Gastrocnemius medialis (tissue), 4 donors: ENCODE measurements at regions of chrX and their contacts with region 1.

Region 1: DNA sequence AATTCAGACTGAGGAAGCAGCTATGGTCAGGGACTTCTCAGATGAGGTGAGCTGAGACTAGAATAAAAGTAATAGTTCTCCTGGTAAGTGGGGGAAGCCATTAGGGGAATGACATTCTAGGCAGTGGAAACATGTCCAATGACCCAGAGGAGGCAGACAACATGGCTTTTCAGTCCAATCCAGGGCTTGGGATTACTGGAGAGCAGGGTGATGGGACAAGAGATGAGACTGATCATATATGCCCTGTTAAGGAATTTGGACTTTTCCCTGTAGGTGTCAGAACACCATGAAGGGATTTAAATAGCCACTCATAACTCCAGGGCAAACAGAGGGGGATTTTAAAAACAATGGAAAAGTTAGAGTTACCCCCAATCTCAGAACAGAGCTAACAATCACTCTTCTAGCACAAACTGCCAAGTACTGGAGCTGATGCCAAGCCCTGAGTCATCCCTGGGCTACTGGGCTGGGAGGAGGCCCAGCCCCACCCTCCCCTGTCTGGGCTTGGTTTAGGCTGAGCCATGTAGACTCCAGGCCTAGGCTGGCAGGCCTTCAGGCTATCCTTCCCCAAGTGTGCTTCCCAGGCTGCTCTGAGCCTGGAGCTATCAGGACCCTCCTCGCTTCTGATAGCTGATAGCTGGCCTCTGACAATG is 22.7 kb upstream of the MSN start:
- DNase-seq: peak; percentile 66 to 84
- ATAC-seq: peak; percentile 94 to 99
- H3K4me3 ChIP-seq: no peak overlapping the region
- H3K27ac ChIP-seq: peak overlapping the region; percentile 58 to 75 (median 66)
- H3K4me1 ChIP-seq: peaks cover 4 to 13% of the 10 kb centered on the region in 2 donors
- H3K27me3 ChIP-seq: no peaks in the 10 kb centered on the region
- CTCF ChIP-seq: no peak
- POLR2A ChIP-seq: no peak

Region 2: DNA sequence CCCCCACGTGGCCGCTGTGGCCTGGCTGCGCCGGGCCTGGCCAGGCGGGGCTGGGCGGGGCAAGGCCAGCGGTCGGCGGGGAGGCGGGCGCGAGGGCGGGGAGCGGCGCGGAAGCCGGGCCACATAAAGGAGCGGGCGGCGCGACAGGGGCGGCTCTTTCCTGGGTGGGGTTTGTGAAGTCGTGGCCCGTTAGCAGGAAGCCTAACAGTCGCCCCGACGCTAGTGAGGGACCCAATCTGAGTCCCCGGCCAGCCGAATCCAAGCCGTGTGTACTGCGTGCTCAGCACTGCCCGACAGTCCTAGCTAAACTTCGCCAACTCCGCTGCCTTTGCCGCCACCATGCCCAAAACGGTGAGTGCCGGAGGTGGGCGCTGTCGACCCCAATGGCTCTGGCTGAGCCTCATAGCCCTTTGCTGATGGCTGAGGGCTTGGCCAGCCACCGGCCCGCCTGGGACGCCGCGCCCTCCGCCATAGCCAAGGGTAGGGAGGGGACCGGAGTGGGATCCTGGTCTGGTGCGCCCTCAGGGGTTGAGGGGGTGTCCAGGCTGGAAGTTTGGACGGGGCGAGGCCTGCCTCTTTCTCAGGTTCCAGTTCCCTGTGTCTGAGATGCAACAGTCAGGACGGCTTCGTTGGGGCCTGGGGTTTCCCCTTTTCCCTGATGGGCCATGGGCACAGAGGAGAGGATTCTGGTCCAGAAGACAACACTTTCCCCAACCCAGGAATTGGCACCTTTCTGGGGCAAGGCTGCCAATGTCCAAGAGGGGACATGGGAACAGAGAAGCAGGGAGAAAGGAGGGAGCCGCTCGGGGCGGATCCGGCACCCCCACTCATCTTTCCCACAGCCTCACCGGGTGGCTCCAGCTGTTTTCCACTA is 23.0 kb after region 1 on chrX and contains the start of gene MSN:
- in situ Hi-C with region 1: no loop called
- intact Hi-C with region 1: loop called (anchors 1 kb)
- DNase-seq: peak; percentile 60 to 66
- ATAC-seq: peak; percentile 75 to 83
- H3K4me3 ChIP-seq: peak within 1 kb of the TSS; percentile 71 to 82 (median 78)
- H3K27ac ChIP-seq: peak within 1 kb of the TSS; percentile 85 to 96 (median 95)
- H3K4me1 ChIP-seq: peaks cover 4 to 24% of the 10 kb centered on the region in 2 donors
- H3K27me3 ChIP-seq: no peaks in the 10 kb centered on the region
- CTCF ChIP-seq: peak in 1 of 5 experiments; percentile 17
- POLR2A ChIP-seq: peak; percentile 72 to 86
- total RNA-seq, gene MSN: 39.1 to 69.6 (median 59.6) TPM